MCF 10A (cell line): ENCODE measurements at regions of chr1 and their contacts with region 1.

Region 1: DNA sequence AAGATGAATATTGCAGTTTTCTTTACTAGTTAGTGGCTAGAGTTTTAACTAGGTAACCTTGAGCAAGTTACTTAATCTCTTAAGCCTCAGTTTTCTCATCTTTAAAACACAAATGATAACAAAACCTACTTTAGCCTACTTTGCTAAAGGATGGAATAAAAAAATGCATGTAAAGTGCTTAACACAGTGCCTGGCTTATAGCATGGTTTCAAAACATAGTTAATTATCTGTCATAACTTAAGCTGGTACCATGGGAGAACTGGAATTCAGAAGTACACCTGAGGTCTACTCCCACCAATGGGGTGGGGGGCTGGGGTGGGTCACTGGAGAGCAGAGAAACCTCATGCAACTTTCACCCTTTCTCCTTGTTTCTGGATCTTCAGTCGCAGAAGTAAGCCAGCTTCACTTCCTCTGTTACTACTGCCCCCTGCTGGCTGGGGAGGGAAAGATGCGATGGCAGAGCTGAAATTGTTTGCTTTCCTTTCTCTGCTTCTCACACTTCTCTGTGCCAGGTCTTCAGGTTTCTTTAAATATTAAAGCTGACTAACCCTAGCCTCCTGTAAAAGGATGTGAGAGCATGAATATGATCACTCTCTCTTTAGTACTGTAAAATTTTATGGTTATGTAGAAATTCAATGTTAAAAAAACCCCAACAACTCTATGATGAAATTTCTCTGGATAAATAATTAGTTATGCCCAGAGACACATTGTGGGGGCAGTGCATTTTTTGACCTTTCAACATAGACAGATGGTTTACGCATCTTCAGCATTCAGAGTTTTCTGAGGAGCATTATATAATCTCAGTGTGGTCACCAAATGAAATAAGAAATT is 324.2 kb downstream of the HLX start:
- DNase-seq: peak; percentile 94
- H3K4me3 Mint-ChIP-seq: no peak overlapping the region
- H3K27ac Mint-ChIP-seq: no peak overlapping the region
- H3K4me1 Mint-ChIP-seq: peaks cover 6% of the 10 kb centered on the region
- H3K27me3 Mint-ChIP-seq: no peaks in the 10 kb centered on the region
- CTCF ChIP-seq: peak; percentile 99

Region 2: GRCh38 chr1:220797553-220797952 is 405.9 kb before region 1 on chr1:
- CTCF ChIA-PET with region 1: no interaction called
- POLR2A ChIA-PET with region 1: no interaction called
- intact Hi-C with region 1: no loop called
- DNase-seq: no peak
- H3K4me3 Mint-ChIP-seq: no peak overlapping the region
- H3K27ac Mint-ChIP-seq: no peak overlapping the region
- H3K4me1 Mint-ChIP-seq: no peaks in the 10 kb centered on the region
- H3K27me3 Mint-ChIP-seq: no peaks in the 10 kb centered on the region
- CTCF ChIP-seq: no peak

Region 3: DNA sequence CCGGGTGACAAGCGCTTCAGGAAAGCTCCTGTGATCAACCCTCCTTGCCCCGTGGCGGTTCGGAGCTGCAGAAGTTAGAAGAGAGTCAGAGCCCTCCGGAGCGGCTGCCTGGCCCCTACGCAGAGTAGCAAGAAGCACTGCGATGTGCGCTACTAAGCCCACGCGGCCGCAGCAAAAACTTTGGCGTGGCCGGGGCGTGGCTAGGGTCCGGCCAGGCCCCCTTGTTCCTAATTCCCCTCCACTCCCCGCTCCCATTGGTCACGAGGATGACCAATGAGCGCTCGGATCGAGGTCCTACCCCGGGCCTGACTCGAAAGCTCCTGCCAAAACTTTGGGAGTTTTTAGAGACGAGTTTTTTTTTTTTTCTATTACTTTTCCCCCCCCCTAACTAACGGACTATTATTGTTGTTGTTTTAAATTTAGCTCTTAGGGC is 324.3 kb before region 1 on chr1 and contains the start of gene HLX:
- CTCF ChIA-PET with region 1: interaction called, 150 read pairs
- POLR2A ChIA-PET with region 1: interaction called, 5 read pairs
- intact Hi-C with region 1: loop called (anchors 1 kb)
- DNase-seq: peak; percentile 81
- H3K4me3 Mint-ChIP-seq: peak within 1 kb of the TSS; percentile 75
- H3K27ac Mint-ChIP-seq: peak within 1 kb of the TSS; percentile 62
- H3K4me1 Mint-ChIP-seq: peaks cover 21% of the 10 kb centered on the region
- H3K27me3 Mint-ChIP-seq: no peaks in the 10 kb centered on the region
- CTCF ChIP-seq: no peak
- total RNA-seq, gene HLX: 2.1 and 2.3 TPM in 2 replicates

Region 4: GRCh38 chr1:221035680-221036153 is 167.7 kb before region 1 on chr1:
- CTCF ChIA-PET with region 1: interaction called, 12 read pairs
- POLR2A ChIA-PET with region 1: no interaction called
- intact Hi-C with region 1: no loop called
- DNase-seq: peak; percentile 83
- H3K4me3 Mint-ChIP-seq: peak overlapping the region; percentile 69
- H3K27ac Mint-ChIP-seq: peak overlapping the region; percentile 74
- H3K4me1 Mint-ChIP-seq: peaks cover 10% of the 10 kb centered on the region
- H3K27me3 Mint-ChIP-seq: no peaks in the 10 kb centered on the region
- CTCF ChIP-seq: no peak

Region 5: DNA sequence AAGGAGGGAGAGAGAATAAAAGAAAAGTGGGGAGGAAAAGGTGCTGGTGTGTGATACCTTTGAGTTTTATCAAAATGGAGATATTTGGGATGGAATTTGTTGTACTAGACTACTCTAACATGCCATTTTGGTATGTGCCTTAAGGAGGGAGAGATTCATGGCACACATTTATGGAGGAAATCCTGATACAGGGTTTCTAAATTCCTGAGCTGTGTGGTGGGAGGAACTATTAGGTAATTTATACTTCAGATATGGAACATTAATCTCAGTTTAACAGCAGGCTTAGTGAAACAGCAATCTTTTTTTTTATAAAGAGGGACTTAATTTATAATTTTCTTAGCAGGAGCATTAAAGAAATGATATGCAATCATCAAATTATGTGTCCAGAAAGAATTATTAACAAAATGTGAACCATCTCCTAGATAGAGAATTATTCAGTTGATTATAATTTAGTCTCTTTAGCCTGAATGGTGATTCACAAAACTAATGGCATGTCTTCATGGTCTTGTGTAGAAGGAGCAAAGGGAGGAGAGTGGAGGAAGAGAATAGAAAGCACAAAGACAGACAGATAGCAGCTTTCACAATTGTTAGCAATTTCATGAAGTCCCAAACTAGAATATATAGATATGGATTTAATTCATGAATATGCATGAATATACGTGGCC is 22.6 kb before region 1 on chr1:
- CTCF ChIA-PET with region 1: interaction called, 20 read pairs
- POLR2A ChIA-PET with region 1: no interaction called
- intact Hi-C with region 1: no loop called
- DNase-seq: no peak
- H3K4me3 Mint-ChIP-seq: no peak overlapping the region
- H3K27ac Mint-ChIP-seq: no peak overlapping the region
- H3K4me1 Mint-ChIP-seq: no peaks in the 10 kb centered on the region
- H3K27me3 Mint-ChIP-seq: no peaks in the 10 kb centered on the region
- CTCF ChIP-seq: no peak

Region 6: DNA sequence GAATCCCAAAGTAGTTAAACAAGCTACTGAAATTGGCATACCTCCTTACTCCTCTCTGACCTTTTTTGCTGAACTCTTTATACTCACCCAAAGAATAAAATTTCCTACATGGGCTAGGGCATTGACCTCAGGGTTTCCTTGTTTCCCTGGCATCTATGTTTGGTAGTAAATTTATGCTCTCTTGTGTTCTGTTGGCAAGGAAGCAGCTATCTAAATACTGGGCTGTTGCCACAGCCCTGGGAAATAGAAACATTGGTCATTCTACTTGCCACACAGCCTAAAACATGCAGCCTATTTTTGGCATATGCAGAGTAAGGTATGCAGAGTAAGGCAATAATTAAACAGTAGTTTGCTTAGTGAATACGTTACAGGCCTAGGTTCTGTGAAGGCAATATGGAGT is 27.2 kb after region 1 on chr1:
- CTCF ChIA-PET with region 1: interaction called, 22 read pairs
- POLR2A ChIA-PET with region 1: no interaction called
- intact Hi-C with region 1: no loop called
- DNase-seq: peak; percentile 38
- H3K4me3 Mint-ChIP-seq: no peak overlapping the region
- H3K27ac Mint-ChIP-seq: no peak overlapping the region
- H3K4me1 Mint-ChIP-seq: no peaks in the 10 kb centered on the region
- H3K27me3 Mint-ChIP-seq: no peaks in the 10 kb centered on the region
- CTCF ChIP-seq: no peak

Region 7: GRCh38 chr1:221256773-221257477 is 53.5 kb after region 1 on chr1:
- CTCF ChIA-PET with region 1: no interaction called
- POLR2A ChIA-PET with region 1: no interaction called
- intact Hi-C with region 1: no loop called
- DNase-seq: no peak
- H3K4me3 Mint-ChIP-seq: no peak overlapping the region
- H3K27ac Mint-ChIP-seq: no peak overlapping the region
- H3K4me1 Mint-ChIP-seq: no peaks in the 10 kb centered on the region
- H3K27me3 Mint-ChIP-seq: no peaks in the 10 kb centered on the region
- CTCF ChIP-seq: no peak

Region 8: DNA sequence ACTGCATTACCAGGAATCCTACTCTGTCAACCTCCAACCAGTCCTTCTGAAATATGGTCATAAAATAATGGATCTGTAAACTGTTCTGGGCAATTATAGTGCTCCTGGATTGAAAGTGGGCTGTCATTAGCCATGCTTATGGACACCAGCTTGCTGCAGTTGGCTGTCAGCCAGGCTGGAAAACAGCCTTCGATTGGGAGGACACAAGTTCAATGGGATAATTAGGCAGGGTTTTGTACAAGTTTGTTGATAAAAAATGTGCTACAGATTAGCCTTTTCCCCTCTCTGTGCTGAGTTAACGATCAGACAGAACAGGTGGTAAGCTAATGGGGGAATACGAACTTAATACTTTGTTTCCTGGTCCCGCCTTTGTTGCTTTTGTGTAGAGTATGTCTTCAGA is 124.5 kb after region 1 on chr1:
- CTCF ChIA-PET with region 1: no interaction called
- POLR2A ChIA-PET with region 1: no interaction called
- intact Hi-C with region 1: no loop called
- DNase-seq: no peak
- H3K4me3 Mint-ChIP-seq: no peak overlapping the region
- H3K27ac Mint-ChIP-seq: no peak overlapping the region
- H3K4me1 Mint-ChIP-seq: no peaks in the 10 kb centered on the region
- H3K27me3 Mint-ChIP-seq: no peaks in the 10 kb centered on the region
- CTCF ChIP-seq: no peak